ENCODE measurements at regions of chr15 and their contacts with region 1.

Region 1: GRCh38 chr15:92808978-92809879 is 90.9 kb upstream of the CHD2 start:
- DNase-seq: peak; percentile 97 to 99
- ATAC-seq: peak; percentile 75 to 81
- H3K4me3 ChIP-seq: peak overlapping the region; percentile 41
- H3K27ac ChIP-seq: peak overlapping the region; percentile 95 to 97
- H3K4me1 ChIP-seq: peaks cover 37% of the 10 kb centered on the region
- CTCF ChIP-seq: peak; percentile 99
- EP300 ChIP-seq: peak in 1 of 2 experiments; percentile 28; a peak in 2 of 5 replicates
- POLR2A ChIP-seq: peak; percentile 81
- RAD21 ChIP-seq: peak; percentile 87 to 99; a peak in 4 of 5 replicates

Region 2: GRCh38 chr15:92820236-92821021 is 11.2 kb after region 1 on chr15:
- CTCF ChIA-PET with region 1: interaction called, 45 read pairs
- POLR2A ChIA-PET with region 1: interaction called, 60 read pairs
- DNase-seq: peak; percentile 96 to 97
- ATAC-seq: peak; percentile 85 to 88
- H3K4me3 ChIP-seq: peak overlapping the region; percentile 46
- H3K27ac ChIP-seq: peak overlapping the region; percentile 90 to 92
- H3K4me1 ChIP-seq: peaks cover 52% of the 10 kb centered on the region
- CTCF ChIP-seq: no peak
- EP300 ChIP-seq: no peak
- POLR2A ChIP-seq: peak; percentile 57
- RAD21 ChIP-seq: peak in 1 of 2 experiments; percentile 3; a peak in 2 of 5 replicates

Region 3: GRCh38 chr15:92831655-92832328 is 22.6 kb after region 1 on chr15:
- CTCF ChIA-PET with region 1: interaction called, 28 read pairs
- POLR2A ChIA-PET with region 1: interaction called, 23 read pairs
- DNase-seq: peak; percentile 95
- ATAC-seq: peak; percentile 100
- H3K4me3 ChIP-seq: peak overlapping the region; percentile 12; the same call in 2 of the 3 replicates
- H3K27ac ChIP-seq: peak overlapping the region; percentile 75 to 83
- H3K4me1 ChIP-seq: peaks cover 29% of the 10 kb centered on the region
- CTCF ChIP-seq: no peak
- EP300 ChIP-seq: no peak
- POLR2A ChIP-seq: peak; percentile 60
- RAD21 ChIP-seq: peak in 1 of 2 experiments; percentile 28; a peak in 2 of 5 replicates

Region 4: GRCh38 chr15:92889390-92890107 is 80.3 kb after region 1 on chr15:
- CTCF ChIA-PET with region 1: interaction called, 168 read pairs
- POLR2A ChIA-PET with region 1: interaction called, 359 read pairs
- DNase-seq: no peak
- ATAC-seq: peak in 1 of 2 experiments; percentile 10; a peak in 2 of 6 replicates
- H3K4me3 ChIP-seq: no peak overlapping the region
- H3K27ac ChIP-seq: no peak overlapping the region
- H3K4me1 ChIP-seq: peaks cover 55% of the 10 kb centered on the region
- CTCF ChIP-seq: no peak
- EP300 ChIP-seq: no peak
- POLR2A ChIP-seq: no peak
- RAD21 ChIP-seq: no peak

Region 5: GRCh38 chr15:92903941-92904831 is 95.0 kb after region 1 on chr15:
- CTCF ChIA-PET with region 1: interaction called, 98 read pairs
- POLR2A ChIA-PET with region 1: interaction called, 278 read pairs
- DNase-seq: peak; percentile 88 to 99
- ATAC-seq: peak; percentile 81 to 90
- H3K4me3 ChIP-seq: peak overlapping the region; percentile 57
- H3K27ac ChIP-seq: peak overlapping the region; percentile 94 to 95
- H3K4me1 ChIP-seq: peaks cover 41% of the 10 kb centered on the region
- CTCF ChIP-seq: no peak
- EP300 ChIP-seq: peak; percentile 52 to 70; a peak in 2 of 5 replicates
- POLR2A ChIP-seq: peak; percentile 70
- RAD21 ChIP-seq: peak in 1 of 2 experiments; percentile 38; a peak in 2 of 5 replicates

Region 6: DNA sequence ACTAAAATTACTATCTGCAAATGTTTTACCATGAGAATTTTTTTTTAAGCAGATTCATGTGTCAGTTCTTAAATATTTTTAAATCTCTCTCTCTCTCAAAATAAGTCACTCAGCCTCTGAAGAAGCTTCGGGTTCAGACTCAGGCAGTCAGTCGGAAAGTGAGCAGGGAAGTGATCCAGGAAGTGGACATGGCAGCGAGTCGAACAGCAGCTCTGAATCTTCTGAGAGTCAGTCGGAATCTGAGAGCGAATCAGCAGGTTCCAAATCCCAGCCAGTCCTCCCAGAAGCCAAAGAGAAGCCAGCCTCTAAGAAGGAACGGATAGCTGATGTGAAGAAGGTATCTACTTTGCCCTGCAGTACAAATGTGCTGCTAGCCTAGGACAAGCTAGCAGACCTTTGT is 115.0 kb after region 1 on chr15:
- CTCF ChIA-PET with region 1: interaction called, 163 read pairs
- POLR2A ChIA-PET with region 1: interaction called, 80 read pairs
- DNase-seq: no peak
- ATAC-seq: no peak
- H3K4me3 ChIP-seq: no peak overlapping the region
- H3K27ac ChIP-seq: no peak overlapping the region
- H3K4me1 ChIP-seq: peaks cover 41% of the 10 kb centered on the region
- CTCF ChIP-seq: no peak
- EP300 ChIP-seq: no peak
- POLR2A ChIP-seq: no peak
- RAD21 ChIP-seq: no peak

Region 7: DNA sequence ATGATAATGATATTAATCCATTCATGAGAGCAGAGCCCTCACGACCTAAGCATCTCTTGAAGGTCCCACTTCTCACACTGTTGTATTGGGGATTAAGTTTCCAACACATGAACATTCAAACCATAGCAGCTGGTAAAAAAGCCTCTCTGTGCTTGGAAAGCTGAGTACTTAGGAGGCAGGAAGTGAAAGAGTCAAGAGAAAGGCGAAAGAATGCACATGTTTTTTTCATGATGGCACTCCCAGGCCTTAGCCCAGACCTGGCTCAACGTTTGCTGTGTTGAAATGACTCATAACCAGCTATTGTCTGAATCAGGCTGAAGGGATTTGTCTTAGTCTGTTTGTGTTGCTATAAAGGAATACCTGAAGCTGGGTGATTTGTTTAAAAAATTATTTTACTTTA is 364.1 kb after region 1 on chr15:
- CTCF ChIA-PET with region 1: no interaction called
- POLR2A ChIA-PET with region 1: no interaction called
- DNase-seq: peak in 1 of 2 experiments; percentile 27
- ATAC-seq: peak; percentile 52 to 58; a peak in 3 of 6 replicates
- H3K4me3 ChIP-seq: no peak overlapping the region
- H3K27ac ChIP-seq: no peak overlapping the region
- H3K4me1 ChIP-seq: no peaks in the 10 kb centered on the region
- CTCF ChIP-seq: no peak
- EP300 ChIP-seq: no peak
- POLR2A ChIP-seq: no peak
- RAD21 ChIP-seq: no peak